ENCODE measurements at regions of chr15 and their contacts with region 1.

Region 1: DNA sequence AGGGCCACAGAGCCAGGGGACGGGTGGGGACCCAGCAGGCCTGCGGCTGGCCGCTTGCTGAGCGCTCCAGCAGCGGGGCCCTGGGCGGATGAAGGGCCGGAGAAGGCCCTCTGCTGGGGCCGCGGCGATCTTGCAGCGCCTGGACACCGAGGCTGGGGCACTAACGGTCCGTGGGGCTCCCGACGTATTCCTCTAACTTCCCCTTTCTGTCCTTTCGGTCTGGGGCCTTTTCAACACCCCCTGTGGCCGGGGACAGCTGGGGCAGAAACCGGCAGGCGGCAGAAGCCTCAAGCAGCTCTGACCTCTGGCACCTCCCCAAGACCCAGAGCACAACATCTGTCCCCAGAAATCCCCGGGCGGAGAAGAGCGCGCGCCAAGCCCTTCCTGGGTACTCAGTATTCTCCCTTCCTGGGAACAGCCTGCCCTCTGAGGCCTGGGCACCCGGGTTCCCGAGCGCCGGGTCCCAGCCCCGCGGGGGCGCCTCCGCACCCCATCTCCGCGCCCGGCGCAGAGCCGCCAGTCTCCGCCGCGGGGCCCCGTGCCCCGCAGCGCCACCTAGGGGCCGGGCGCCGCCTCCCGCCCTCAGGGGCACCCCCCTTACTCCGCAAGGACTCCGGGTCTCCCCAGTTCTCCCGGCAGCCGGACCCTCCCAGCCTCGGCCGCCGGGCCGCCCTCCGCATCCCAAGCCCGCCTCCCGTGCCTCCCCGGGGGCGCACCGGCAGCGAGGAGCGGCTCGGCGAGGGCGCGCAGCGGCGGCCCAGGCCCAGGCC is 582 bp upstream of the SLCO3A1 start:
- DNase-seq: peak; percentile 56 to 72
- ATAC-seq: peak; percentile 88
- H3K4me3 ChIP-seq: peak overlapping the region; percentile 56 to 84 (median 72)
- H3K27ac ChIP-seq: peak overlapping the region; percentile 78 to 89 (median 86)
- H3K4me1 ChIP-seq: peaks cover 11 to 22% of the 10 kb centered on the region in 2 donors
- H3K27me3 ChIP-seq: no peaks in the 10 kb centered on the region
- CTCF ChIP-seq: peak; percentile 61 to 94 (median 84)
- POLR2A ChIP-seq: no peak

Region 2: GRCh38 chr15:91302588-91303439 is 550.1 kb before region 1 on chr15:
- in situ Hi-C with region 1: loop called in 3 of 4 experiments (anchors 10 to 25 kb)
- intact Hi-C with region 1: loop called (anchors 1 kb)
- DNase-seq: peak in 1 of 2 donors; percentile 20
- ATAC-seq: peak; percentile 80 to 81
- H3K4me3 ChIP-seq: no peak overlapping the region
- H3K27ac ChIP-seq: no peak overlapping the region
- H3K4me1 ChIP-seq: peaks cover 0 to 3% of the 10 kb centered on the region in 2 donors
- H3K27me3 ChIP-seq: peaks cover 2 to 15% (median 6%) of the 10 kb centered on the region in 3 donors
- CTCF ChIP-seq: peak; percentile 55 to 79 (median 68)
- POLR2A ChIP-seq: no peak

Region 3: DNA sequence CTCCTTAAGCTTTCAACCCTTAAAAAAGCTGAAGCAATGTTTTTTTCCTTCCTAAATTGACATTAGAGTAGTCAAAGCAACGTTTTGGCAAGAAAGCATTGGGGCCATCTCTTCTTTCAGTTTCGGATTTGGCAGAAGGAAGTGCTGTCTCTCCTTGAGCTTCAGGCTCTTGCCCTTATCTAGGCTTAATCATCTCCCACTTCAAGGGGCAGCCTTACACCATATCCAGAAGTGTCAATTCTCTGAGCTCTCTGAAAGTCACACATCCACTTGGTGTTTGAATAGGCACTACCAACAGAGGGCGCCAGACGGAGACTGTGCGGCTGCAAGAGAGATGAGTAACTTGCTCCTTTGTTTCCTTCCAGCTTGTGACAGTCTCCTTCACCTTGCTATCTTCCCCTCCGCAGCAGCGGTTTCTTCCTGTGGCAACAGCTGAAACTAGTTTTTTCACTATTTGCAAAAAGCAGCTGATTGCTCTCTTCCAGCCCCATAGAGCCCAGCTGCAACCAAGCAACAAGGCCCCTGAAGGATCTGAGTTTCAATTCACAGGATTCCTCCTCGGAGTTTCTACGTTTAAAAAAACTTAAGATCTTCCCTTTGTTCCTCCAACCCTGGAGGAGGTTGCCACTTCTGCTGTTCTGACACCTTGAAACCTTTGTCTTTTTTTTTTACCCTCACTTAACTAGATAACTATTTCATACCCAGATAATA is 146.4 kb before region 1 on chr15:
- in situ Hi-C with region 1: no loop called
- intact Hi-C with region 1: loop called (anchors 5 kb)
- DNase-seq: peak; percentile 24 to 71
- ATAC-seq: peak; percentile 73 to 76
- H3K4me3 ChIP-seq: no peak overlapping the region
- H3K27ac ChIP-seq: no peak overlapping the region
- H3K4me1 ChIP-seq: peaks cover 0 to 4% of the 10 kb centered on the region in 2 donors
- H3K27me3 ChIP-seq: no peaks in the 10 kb centered on the region
- CTCF ChIP-seq: peak; percentile 60 to 82 (median 72)
- POLR2A ChIP-seq: no peak

Region 4: DNA sequence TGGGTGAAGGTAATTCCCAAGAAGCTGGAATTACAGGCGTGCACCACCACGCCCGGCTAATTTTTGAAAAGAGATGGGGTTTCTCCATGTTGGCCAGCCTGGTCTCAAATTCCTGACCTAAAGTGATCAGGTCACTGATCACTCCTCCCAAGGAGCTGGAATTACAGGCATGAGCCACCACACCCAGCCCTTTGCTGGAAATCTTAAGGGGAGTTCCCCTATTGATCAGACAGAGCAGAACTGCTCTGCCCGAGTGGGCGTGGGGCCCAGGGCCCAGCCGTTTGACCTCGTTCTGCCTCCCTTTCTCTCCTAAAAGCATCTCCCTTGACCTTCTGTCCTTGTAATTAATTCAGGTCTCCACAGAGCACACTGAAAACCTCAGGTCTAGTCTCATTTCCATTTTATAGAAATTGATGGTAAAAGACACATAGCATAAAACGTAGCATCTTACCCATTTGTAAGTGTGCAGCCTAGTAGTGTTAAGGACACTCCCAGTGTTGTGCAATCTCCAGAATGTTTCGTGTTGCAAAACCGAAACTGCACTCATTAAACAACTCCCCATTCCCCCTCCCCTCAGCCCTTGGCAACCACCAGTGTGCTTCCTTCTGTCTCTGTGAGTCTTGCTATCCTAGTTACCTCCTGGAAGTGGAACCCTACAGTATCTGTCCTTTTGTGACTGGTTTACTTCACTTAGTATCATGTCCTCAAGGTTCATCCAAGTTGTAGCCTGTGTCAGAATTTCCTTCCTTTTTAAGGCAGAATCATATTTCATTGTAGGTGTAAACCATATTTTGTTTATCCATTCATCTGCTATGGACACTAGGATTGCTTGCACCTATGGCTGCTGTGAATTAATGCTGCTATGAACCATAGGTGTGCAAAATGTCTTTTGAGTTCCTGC is 90.0 kb after region 1 on chr15:
- in situ Hi-C with region 1: no loop called
- intact Hi-C with region 1: loop called (anchors 5 kb)
- DNase-seq: peak; percentile 78 to 84
- ATAC-seq: peak; percentile 94 to 95
- H3K4me3 ChIP-seq: peak overlapping the region in 2 of 4 donors; percentile 25 to 34
- H3K27ac ChIP-seq: peak overlapping the region; percentile 43 to 60 (median 56)
- H3K4me1 ChIP-seq: peaks cover 35 to 55% of the 10 kb centered on the region in 2 donors
- H3K27me3 ChIP-seq: no peaks in the 10 kb centered on the region
- CTCF ChIP-seq: no peak
- POLR2A ChIP-seq: no peak

Region 5: GRCh38 chr15:91970142-91970541 is 117.2 kb after region 1 on chr15:
- in situ Hi-C with region 1: no loop called
- intact Hi-C with region 1: loop called (anchors 5 kb)
- DNase-seq: peak; percentile 39 to 75
- ATAC-seq: peak; percentile 79 to 85
- H3K4me3 ChIP-seq: no peak overlapping the region
- H3K27ac ChIP-seq: peak overlapping the region; percentile 7 to 61 (median 32)
- H3K4me1 ChIP-seq: peaks cover 31 to 37% of the 10 kb centered on the region in 2 donors
- H3K27me3 ChIP-seq: no peaks in the 10 kb centered on the region
- CTCF ChIP-seq: no peak
- POLR2A ChIP-seq: no peak

Region 6: GRCh38 chr15:92069308-92070250 is 216.7 kb after region 1 on chr15:
- in situ Hi-C with region 1: loop called in 2 of 4 experiments (anchors 5 to 10 kb)
- intact Hi-C with region 1: no loop called
- DNase-seq: peak in 1 of 2 donors; percentile 17
- ATAC-seq: peak; percentile 50 to 66
- H3K4me3 ChIP-seq: peak overlapping the region in 2 of 4 donors; percentile 26 to 30
- H3K27ac ChIP-seq: peak overlapping the region in 3 of 4 donors; percentile 19 to 23 (median 20)
- H3K4me1 ChIP-seq: peaks cover 6 to 12% of the 10 kb centered on the region in 2 donors
- H3K27me3 ChIP-seq: no peaks in the 10 kb centered on the region
- CTCF ChIP-seq: no peak
- POLR2A ChIP-seq: no peak

Measured in gastrocnemius medialis (tissue), 4 donors.